Sigmoid colon (tissue), 7 donors: ENCODE measurements at regions of chr2 and their contacts with region 1.

Region 1: DNA sequence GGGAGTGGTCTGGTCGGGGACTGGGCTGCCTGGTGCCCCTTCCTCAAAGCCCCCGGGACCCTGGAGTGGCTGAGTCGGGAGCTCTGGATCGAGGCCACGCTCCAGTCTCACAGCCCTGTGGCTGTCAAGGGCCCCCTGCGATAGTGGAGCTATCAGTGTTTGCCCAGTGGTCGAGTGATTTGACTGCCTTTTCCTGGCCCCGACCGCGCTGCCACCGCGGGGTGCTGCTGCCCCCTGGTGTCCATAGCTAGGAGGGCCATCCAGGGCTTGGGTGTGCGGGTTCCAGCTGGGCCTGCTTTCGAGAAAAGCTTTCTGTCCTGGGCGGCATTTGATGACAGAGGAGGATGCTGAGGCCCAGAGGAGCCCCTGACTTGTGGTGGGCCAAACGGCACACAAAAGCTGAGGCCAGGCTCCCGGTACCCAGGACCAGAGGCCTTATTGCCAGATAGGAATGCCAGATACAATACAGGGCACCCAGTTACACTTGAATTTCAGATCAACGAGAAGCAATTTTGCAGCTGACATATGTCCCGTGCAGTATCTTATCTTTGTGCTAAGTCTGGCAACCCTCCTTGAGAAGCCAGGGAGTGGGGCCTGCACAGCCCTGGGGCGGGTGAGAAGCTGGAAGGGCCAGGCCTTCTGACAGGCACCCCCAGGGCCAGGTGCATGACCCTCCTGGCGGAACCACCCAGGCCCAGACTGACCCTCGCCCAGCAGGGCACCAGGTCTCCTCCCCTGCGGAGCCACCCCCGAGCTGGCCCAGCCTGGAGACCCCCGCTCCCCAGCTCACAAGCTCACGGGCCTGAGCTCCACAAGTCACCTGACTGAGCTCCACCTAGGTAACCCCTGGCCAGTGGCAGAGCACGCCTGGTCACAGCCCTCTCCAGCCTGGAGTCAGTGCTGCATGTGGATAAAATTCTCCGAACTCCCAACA is 13.0 kb downstream of the ODC1 start:
- DNase-seq: peak; percentile 85
- H3K4me3 ChIP-seq: no peak overlapping the region
- H3K27ac ChIP-seq: no peak overlapping the region
- H3K4me1 ChIP-seq: peaks cover 0 to 6% (median 4%) of the 10 kb centered on the region in 4 donors
- H3K27me3 ChIP-seq: no peaks in the 10 kb centered on the region
- CTCF ChIP-seq: peak; percentile 94 to 97 (median 96)
- EP300 ChIP-seq: no peak
- POLR2A ChIP-seq: no peak

Region 2: GRCh38 chr2:9799665-9800632 is 635.2 kb before region 1 on chr2:
- intact Hi-C with region 1: loop called (anchors 10 kb)
- DNase-seq: peak; percentile 90
- H3K4me3 ChIP-seq: no peak overlapping the region
- H3K27ac ChIP-seq: no peak overlapping the region
- H3K4me1 ChIP-seq: peaks cover 0 to 22% (median 4%) of the 10 kb centered on the region in 4 donors
- H3K27me3 ChIP-seq: no peaks in the 10 kb centered on the region
- CTCF ChIP-seq: peak; percentile 80 to 97 (median 93)
- EP300 ChIP-seq: no peak
- POLR2A ChIP-seq: no peak

Region 3: DNA sequence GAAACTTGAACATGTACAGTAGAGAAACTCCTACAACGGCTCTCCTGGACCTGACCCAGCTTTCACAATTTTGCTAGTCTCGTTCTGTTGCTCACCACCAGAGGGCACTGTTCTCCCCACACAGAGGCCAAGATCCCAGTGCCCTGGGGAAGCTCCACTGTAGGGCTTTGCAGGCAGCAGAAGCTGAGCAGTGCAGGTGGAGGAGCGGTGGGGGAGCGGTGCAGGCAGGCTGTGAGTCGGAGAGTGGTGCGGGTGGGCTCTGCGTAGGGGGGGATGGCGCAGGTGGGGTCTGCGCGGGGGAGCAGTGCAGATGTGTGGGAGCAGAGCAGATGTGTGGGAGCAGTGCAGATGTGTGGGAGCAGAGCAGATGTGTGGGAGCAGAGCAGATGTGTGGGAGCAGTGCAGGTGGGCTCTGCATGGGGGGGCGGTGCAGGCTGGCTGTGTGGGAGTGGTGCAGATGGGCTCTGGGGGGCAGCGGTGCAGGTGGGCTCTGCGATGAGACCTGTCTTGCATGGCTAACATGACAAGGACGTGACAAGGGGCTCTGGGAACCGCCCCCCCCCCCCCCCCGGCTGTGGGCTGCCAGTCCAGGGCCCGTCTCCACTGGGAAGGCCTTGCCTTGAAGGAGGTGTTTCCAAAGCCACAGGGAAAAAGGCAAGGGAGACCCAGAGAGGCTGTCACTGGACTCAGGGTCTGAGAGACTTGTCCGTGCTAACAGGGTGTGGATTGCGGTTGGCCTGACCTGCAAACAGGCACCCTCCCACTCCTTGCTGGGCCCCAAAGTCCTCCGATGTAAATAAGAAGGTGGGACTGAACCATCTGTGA is 362.3 kb before region 1 on chr2:
- intact Hi-C with region 1: loop called (anchors 1 kb)
- DNase-seq: peak; percentile 94
- H3K4me3 ChIP-seq: no peak overlapping the region
- H3K27ac ChIP-seq: no peak overlapping the region
- H3K4me1 ChIP-seq: peaks cover 0 to 19% (median 6%) of the 10 kb centered on the region in 4 donors
- H3K27me3 ChIP-seq: no peaks in the 10 kb centered on the region
- CTCF ChIP-seq: peak; percentile 75 to 86 (median 84)
- EP300 ChIP-seq: no peak
- POLR2A ChIP-seq: no peak

Region 4: GRCh38 chr2:10122386-10123280 is 312.5 kb before region 1 on chr2 and contains the start of gene RRM2:
- intact Hi-C with region 1: loop called (anchors 1 kb)
- DNase-seq: peak; percentile 97
- H3K4me3 ChIP-seq: peak within 1 kb of the TSS; percentile 13 to 63 (median 54)
- H3K27ac ChIP-seq: no peak within 1 kb of the TSS
- H3K4me1 ChIP-seq: peaks cover 0 to 33% (median 25%) of the 10 kb centered on the region in 4 donors
- H3K27me3 ChIP-seq: peaks cover 13 to 20% (median 18%) of the 10 kb centered on the region in 3 donors
- CTCF ChIP-seq: no peak
- EP300 ChIP-seq: no peak
- POLR2A ChIP-seq: no peak
- total RNA-seq, gene RRM2: 0.16 to 4.3 (median 2.7) TPM in 3 of 4 donors, not detected in the other

Region 5: DNA sequence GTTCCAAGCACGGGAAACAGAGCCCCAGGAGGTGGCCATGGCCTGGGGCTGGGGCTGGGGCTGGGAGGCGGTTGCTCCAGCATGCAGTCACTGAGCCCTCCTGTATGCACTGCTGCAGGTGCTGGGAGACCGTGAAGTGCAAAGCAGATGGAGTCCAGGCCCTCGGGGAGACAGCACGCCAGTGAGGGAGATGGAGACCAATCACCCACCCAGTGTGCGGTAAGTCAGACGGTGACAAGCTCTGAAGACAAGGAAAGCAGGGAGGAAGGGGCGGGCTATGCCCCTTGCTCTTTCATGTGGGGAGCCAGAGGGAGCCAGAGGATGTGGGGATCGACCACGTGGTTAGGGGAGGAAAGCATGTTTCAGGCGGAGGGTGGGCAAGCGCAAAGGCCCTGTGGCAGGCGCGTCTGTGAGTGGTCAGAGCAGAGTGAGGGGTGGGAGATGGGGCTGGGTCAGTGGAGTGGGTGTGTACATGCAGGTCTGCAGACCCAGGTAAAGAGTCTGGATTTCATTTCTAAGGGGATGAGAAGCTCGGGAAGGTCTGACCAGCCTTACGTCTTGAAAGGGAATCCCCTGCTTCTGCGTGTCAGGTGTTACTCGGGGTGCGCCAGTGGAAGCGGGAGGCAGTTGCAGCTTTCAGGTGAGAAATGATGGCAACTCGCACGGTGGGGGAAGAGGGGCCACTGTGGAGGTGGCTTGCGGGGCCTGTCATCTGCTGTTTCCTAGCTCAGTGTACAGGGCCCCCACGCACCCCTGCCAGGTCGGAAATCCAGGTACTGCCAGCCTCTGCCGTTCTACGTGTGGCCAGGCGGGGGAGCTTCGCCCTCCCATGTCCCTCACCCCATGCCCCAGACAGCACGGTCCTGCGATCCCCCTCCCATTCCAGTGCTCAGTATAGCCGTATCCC is 293.2 kb before region 1 on chr2:
- intact Hi-C with region 1: loop called (anchors 5 kb)
- DNase-seq: peak; percentile 57
- H3K4me3 ChIP-seq: no peak overlapping the region
- H3K27ac ChIP-seq: no peak overlapping the region
- H3K4me1 ChIP-seq: no peaks in the 10 kb centered on the region
- H3K27me3 ChIP-seq: peaks cover 0 to 4% (median 0%) of the 10 kb centered on the region in 3 donors
- CTCF ChIP-seq: peak in 3 of 4 experiments; percentile 46 to 48 (median 48)
- EP300 ChIP-seq: no peak
- POLR2A ChIP-seq: no peak

Region 6: DNA sequence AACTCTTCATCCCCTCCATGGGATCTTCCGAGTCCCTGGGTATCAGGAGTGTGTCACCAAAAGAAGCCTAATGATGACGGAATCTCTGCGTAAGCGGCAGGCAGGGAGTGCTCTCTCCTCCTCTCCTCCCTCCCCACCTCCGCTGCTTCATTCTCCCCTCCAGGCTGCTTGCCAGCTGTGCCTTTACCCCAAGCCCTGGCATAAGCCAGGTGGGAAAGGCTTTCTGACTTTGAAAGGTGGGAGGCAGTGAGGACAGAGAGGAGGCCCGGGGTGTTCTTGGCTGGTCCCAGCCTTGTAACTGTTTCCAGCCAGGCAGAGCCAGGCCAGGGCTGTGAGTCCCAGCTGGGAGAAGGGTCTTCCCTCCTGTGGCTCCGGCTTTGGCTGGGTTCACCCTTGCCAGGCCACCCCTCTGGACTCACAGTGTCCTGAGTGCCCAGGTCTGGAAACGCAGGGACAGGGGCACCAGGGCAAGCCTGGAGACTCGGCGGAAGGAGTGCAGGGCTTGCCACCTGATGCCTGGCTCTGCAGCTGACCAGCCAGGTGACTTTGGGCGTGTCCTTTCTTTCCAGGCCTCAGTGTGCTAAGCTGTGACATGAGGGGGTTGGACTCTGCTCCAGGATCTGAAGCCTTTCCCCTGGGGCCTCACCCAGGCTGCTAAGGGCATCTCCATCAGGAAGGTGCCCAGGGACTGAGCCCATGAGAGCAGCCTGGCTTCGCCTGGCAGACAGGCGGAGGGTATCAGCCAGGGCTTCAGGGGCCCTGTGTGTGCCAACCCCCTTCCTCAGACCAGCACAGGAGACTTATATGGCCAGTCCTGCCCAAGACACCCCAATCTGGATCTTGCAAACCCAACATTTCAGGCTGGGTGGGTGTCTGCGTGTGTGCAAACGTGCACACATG is 165.2 kb before region 1 on chr2:
- intact Hi-C with region 1: loop called (anchors 1 kb)
- DNase-seq: no peak
- H3K4me3 ChIP-seq: no peak overlapping the region
- H3K27ac ChIP-seq: no peak overlapping the region
- H3K4me1 ChIP-seq: peaks cover 0 to 8% (median 1%) of the 10 kb centered on the region in 4 donors
- H3K27me3 ChIP-seq: no peaks in the 10 kb centered on the region
- CTCF ChIP-seq: no peak
- EP300 ChIP-seq: no peak
- POLR2A ChIP-seq: no peak

Region 7: DNA sequence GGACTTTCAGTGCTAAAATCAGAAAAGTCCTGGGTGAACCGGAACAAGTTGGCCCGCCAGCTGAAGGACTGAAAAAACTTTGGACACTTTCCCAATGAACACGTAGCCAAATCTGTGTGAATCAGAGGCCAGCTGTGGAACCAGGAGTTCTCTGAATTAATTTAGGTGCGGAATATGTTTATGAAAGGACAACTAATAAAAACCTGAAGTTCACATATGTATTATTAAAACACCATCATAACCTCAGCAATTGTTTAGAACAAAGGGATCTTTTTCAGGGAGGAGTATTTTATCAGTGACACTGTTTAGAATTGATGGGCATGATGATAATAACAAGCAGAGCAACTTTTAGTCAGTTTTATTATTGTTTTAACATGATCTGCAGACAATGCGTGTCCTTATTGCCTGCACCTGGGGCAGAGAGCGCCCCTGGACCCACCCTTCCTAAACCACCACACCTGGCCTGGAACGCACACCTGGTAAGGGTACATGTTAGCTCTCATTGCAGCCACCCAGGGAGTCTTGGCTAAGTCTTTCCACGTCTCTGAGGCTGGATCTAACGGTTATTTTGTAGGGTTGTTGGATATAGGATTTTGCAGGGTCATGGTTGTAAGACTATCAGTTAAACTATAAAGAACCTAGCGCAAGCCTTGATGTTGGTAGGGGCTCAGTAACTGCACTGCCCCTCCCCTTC is 22.9 kb after region 1 on chr2:
- intact Hi-C with region 1: no loop called
- DNase-seq: no peak
- H3K4me3 ChIP-seq: no peak overlapping the region
- H3K27ac ChIP-seq: peak overlapping the region in 3 of 4 donors; percentile 32 to 59 (median 37)
- H3K4me1 ChIP-seq: peaks cover 0 to 34% (median 17%) of the 10 kb centered on the region in 4 donors
- H3K27me3 ChIP-seq: no peaks in the 10 kb centered on the region
- CTCF ChIP-seq: no peak
- EP300 ChIP-seq: no peak
- POLR2A ChIP-seq: no peak

Region 8: DNA sequence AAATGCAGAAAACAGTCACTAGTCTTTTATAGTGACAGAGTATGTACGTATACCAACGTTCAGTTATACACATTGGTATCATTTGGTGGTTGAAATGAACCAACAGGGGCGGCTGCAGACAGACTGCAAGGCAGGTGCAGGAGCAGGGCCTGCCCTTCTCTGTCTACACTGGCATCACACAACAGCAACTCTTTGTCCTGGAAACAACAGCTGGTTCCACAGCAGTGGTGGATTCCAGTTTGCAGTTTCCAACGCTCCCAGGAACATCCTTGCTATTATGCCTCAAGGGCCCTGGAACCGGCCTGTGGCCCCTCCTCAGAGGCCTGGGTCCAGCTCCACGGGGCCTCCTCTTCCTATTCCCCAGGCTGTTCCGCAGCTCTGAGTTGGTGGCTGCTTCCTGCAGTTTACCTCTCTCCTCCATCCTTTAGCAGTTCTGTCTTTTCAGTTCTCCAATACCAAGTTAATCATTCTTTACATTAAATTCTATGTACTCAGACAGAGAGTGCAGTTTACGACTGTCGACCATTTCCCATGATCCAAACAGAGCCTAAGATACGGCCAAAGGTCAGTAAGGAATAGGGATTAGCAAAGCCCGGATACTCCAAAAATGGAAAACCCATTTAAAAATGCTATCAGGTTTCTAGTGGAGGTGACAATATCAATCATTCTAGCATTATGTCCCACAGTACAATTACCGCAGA is 166.9 kb after region 1 on chr2:
- intact Hi-C with region 1: no loop called
- DNase-seq: no peak
- H3K4me3 ChIP-seq: no peak overlapping the region
- H3K27ac ChIP-seq: no peak overlapping the region
- H3K4me1 ChIP-seq: no peaks in the 10 kb centered on the region
- H3K27me3 ChIP-seq: no peaks in the 10 kb centered on the region
- CTCF ChIP-seq: no peak
- EP300 ChIP-seq: no peak
- POLR2A ChIP-seq: no peak